Activated B cell treated with CpG ODN at 0.5 μM for 24 hours (primary cell): ENCODE measurements at regions of chr17 and their contacts with region 1.

Region 1: GRCh38 chr17:50129728-50130558 is at the start of gene SAMD14:
- DNase-seq: peak; percentile 52
- ATAC-seq: peak; percentile 61
- H3K4me3 Mint-ChIP-seq: peak within 1 kb of the TSS; percentile 80
- H3K27ac Mint-ChIP-seq: peak within 1 kb of the TSS; percentile 63
- H3K4me1 Mint-ChIP-seq: peaks cover 37% of the 10 kb centered on the region
- H3K27me3 Mint-ChIP-seq: peaks cover 8% of the 10 kb centered on the region
- CTCF ChIP-seq: no peak
- total RNA-seq, gene SAMD14: 4.7 and 4.9 TPM in 2 replicates

Region 2: DNA sequence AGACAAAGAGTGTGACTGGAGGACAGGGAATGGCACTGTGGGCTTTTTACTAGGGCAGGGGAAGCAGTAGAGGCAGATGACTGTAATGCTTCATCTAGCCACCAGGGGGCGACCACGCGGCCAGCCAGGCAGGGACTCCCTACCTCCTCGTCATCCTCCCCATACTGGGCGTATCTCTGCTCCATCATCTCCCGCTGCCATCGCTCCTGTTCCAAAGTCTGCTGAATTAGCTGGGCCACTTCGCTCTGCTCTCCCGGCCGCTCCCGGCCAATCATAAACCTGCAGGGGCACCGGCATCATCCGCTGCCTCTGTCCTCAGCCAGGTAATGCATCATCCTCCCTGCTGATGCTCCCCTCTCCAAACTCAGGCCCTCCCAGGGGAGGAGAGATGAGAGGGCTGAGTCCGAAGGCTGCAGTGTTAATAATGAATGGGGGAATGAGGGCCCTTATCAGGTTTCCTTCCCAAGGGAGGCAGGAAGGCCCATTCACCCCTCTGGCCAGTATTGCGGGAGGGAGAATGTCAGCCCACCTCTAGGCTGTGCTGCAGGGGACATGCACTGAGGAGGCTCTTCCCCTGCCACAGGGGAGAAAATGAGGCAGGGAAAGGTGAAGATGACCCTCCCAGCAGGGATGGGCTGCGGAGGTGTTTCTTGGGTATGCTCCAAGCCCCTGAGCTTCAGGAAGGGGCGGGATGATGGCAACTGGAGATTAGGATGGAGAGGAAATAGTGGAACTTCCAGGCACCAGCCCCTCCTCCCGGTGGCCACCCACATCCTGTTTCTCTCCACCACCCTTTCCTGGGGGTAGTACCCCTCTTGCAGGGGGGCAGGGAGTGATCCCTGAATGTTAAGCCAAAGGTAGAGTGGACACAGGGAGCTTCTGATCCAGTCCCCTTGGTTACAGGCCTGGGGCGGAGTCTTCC is 10.3 kb after region 1 on chr17:
- CTCF ChIA-PET with region 1: interaction called, 9 read pairs
- POLR2A ChIA-PET with region 1: interaction called, 10 read pairs
- intact Hi-C with region 1: no loop called
- DNase-seq: peak; percentile 76
- ATAC-seq: peak; percentile 85
- H3K4me3 Mint-ChIP-seq: peak overlapping the region; percentile 41
- H3K27ac Mint-ChIP-seq: peak overlapping the region; percentile 70
- H3K4me1 Mint-ChIP-seq: peaks cover 63% of the 10 kb centered on the region
- H3K27me3 Mint-ChIP-seq: no peaks in the 10 kb centered on the region
- CTCF ChIP-seq: peak; percentile 43

Region 3: DNA sequence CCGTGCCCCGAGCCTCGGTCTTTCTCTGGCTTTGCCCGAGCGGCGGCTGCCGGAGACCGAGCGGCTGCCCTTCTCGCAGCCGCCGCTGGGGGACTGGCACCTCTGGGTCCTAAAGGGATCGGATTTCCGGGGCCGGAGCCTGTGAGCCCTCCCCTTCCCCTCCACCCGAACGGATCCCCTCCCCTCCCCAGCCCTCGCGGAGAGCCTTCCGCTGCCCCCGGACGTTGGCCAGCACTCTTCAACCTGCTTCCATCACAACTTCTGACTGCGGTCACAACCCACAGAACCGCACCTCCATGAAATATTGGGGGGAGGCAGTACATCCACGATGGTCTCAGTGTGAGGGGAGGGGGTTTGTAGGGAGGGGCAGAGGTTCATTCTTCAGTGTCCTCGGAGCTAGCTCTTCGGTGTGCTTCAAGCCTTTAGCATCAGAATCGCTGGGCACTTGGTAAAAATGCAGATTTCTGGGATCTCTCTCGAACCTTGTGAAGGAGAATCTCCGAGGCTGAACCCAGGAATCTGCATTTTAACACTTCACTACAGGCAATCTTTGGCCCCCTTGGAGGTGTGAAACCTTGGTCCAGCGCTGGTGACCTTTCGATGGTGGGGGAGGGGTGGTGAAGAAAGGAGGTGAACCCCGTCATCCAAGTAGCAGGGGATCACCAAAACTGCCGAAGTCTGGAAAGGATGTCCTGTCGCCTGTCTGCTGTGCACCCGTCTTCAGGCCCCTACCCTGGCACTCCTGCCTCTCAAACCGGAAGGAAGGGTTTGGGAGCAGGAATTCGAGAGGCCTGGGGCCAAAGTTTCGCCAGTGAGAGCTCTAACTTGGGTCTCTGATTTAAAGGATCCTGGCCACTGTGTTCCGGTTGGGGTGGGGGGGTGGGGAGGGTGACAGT is 21.3 kb after region 1 on chr17:
- CTCF ChIA-PET with region 1: interaction called, 3 read pairs
- POLR2A ChIA-PET with region 1: interaction called, 82 read pairs
- intact Hi-C with region 1: loop called (anchors 1 kb)
- DNase-seq: peak; percentile 80
- ATAC-seq: peak; percentile 40
- H3K4me3 Mint-ChIP-seq: peak overlapping the region; percentile 93
- H3K27ac Mint-ChIP-seq: peak overlapping the region; percentile 91
- H3K4me1 Mint-ChIP-seq: peaks cover 34% of the 10 kb centered on the region
- H3K27me3 Mint-ChIP-seq: no peaks in the 10 kb centered on the region
- CTCF ChIP-seq: no peak